T-cell (primary cell): ENCODE measurements at regions of chr9 and their contacts with region 1.

Region 1: GRCh38 chr9:77977210-77977611 is 54.4 kb downstream of the GNAQ start:
- DNase-seq: peak in 32 of 35 experiments; percentile 13 to 68 (median 29)
- ATAC-seq: peak; percentile 17 to 64 (median 64)
- H3K4me3 ChIP-seq: peak overlapping the region in 1 of 2 donors; percentile 25
- H3K4me3 Mint-ChIP-seq: peak overlapping the region in 1 of 3 donors; percentile 56
- H3K27ac ChIP-seq: peak overlapping the region; percentile 25
- H3K27ac Mint-ChIP-seq: peak overlapping the region; percentile 78 to 85
- H3K4me1 ChIP-seq: peaks cover 36 to 39% of the 10 kb centered on the region in 2 experiments
- H3K4me1 Mint-ChIP-seq: peaks cover 64 to 73% (median 66%) of the 10 kb centered on the region in 3 donors
- H3K27me3 ChIP-seq: no peaks in the 10 kb centered on the region
- H3K27me3 Mint-ChIP-seq: no peaks in the 10 kb centered on the region

Region 2: DNA sequence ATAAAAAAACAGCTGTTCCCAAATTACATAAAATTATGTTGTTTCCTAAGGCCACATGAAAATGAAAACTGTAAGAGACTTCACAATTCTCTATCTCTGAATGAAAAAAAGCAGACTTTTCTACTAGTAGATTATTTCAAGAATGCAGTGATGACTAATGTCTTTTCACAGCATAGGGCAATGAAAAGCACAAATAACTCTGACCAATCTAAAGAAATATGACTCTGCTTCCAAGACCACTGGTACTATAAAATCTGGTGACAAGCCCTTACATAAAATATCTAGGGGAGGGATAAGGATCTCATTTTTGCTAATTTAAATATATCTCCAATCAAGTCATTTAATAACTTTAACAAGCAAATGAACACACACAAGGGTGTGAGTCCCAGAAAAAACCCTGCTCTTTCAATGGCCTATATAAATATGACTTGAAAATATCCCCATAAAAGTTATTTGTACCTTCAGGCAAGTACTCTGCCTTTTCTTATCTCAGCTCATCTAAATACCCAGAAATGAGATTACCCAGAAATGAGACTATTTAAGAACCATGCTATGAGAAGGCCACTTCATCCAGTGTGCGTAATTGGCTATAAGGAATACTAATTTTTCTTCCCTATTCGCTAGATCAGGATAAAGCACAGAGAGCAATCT is 50.8 kb before region 1 on chr9:
- CTCF ChIA-PET with region 1: no interaction called
- POLR2A ChIA-PET with region 1: interaction called in 1 of 2 experiments, 11 read pairs
- DNase-seq: no peak
- ATAC-seq: no peak
- H3K4me3 ChIP-seq: no peak overlapping the region
- H3K4me3 Mint-ChIP-seq: no peak overlapping the region
- H3K27ac ChIP-seq: no peak overlapping the region
- H3K27ac Mint-ChIP-seq: no peak overlapping the region
- H3K4me1 ChIP-seq: peaks cover 0 to 2% of the 10 kb centered on the region in 2 experiments
- H3K4me1 Mint-ChIP-seq: peaks cover 32 to 38% (median 34%) of the 10 kb centered on the region in 3 donors
- H3K27me3 ChIP-seq: no peaks in the 10 kb centered on the region
- H3K27me3 Mint-ChIP-seq: no peaks in the 10 kb centered on the region

Region 3: GRCh38 chr9:78035383-78035993 is 58.3 kb after region 1 on chr9:
- CTCF ChIA-PET with region 1: interaction called, 36 to 40 read pairs
- POLR2A ChIA-PET with region 1: interaction called in 1 of 2 experiments, 3 read pairs
- DNase-seq: peak in 32 of 35 experiments; percentile 8 to 88 (median 39)
- ATAC-seq: no peak
- H3K4me3 ChIP-seq: peak overlapping the region in 1 of 2 donors; percentile 18
- H3K4me3 Mint-ChIP-seq: no peak overlapping the region
- H3K27ac ChIP-seq: no peak overlapping the region
- H3K27ac Mint-ChIP-seq: peak overlapping the region; percentile 57 to 83
- H3K4me1 ChIP-seq: peaks cover 10 to 17% of the 10 kb centered on the region in 2 experiments
- H3K4me1 Mint-ChIP-seq: peaks cover 34 to 37% (median 36%) of the 10 kb centered on the region in 3 donors
- H3K27me3 ChIP-seq: no peaks in the 10 kb centered on the region
- H3K27me3 Mint-ChIP-seq: no peaks in the 10 kb centered on the region

Region 4: GRCh38 chr9:78121488-78121887 is 144.3 kb after region 1 on chr9:
- CTCF ChIA-PET with region 1: interaction called in 1 of 2 experiments, 19 read pairs
- POLR2A ChIA-PET with region 1: no interaction called
- DNase-seq: peak in 29 of 35 experiments; percentile 8 to 70 (median 25)
- ATAC-seq: no peak
- H3K4me3 ChIP-seq: no peak overlapping the region
- H3K4me3 Mint-ChIP-seq: no peak overlapping the region
- H3K27ac ChIP-seq: no peak overlapping the region
- H3K27ac Mint-ChIP-seq: peak overlapping the region; percentile 68 to 69
- H3K4me1 ChIP-seq: peaks cover 15 to 26% of the 10 kb centered on the region in 2 experiments
- H3K4me1 Mint-ChIP-seq: peaks cover 40 to 50% (median 45%) of the 10 kb centered on the region in 3 donors
- H3K27me3 ChIP-seq: no peaks in the 10 kb centered on the region
- H3K27me3 Mint-ChIP-seq: peaks cover 0 to 2% of the 10 kb centered on the region in 2 donors

Region 5: DNA sequence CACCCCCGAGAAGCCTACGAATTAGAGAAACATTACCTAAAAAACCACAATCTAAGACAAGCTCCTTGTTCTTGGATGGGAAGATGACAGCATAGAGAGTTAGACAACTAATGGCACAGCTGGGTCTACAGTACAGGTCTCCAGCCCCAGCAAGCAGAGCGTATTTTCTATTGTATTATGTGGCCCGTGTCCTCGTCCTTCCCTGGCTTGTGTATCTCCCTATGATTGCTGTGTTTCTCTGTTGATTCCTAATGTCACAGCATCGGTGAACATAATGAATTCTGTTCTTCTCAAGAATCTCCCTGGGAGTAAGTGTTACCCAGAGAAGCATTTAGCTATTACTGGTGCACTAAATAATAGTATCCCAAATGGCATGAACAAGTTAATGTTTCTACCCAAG is 191.9 kb after region 1 on chr9:
- CTCF ChIA-PET with region 1: no interaction called
- POLR2A ChIA-PET with region 1: no interaction called
- DNase-seq: no peak
- ATAC-seq: no peak
- H3K4me3 ChIP-seq: no peak overlapping the region
- H3K4me3 Mint-ChIP-seq: no peak overlapping the region
- H3K27ac ChIP-seq: no peak overlapping the region
- H3K27ac Mint-ChIP-seq: no peak overlapping the region
- H3K4me1 ChIP-seq: no peaks in the 10 kb centered on the region
- H3K4me1 Mint-ChIP-seq: no peaks in the 10 kb centered on the region
- H3K27me3 ChIP-seq: no peaks in the 10 kb centered on the region
- H3K27me3 Mint-ChIP-seq: no peaks in the 10 kb centered on the region

Region 6: DNA sequence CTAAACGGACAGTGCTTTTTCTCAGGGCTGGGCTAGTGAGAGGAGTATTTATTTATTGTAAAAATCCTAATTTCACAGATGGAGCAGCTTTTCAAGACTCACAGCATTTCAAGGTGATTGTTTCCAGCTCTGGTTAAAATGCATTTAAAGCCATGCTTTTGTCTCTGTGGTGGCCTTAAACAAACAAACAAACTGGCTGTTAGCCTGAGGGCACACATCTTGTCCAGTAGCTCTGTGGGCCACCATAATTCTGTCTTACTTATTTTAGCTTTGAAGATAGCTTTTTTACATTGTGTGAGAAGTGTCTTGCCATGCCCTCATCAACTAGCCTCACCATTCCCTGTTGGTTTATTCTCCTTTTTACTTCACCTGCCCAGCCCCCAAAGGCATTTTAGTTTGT is 537.9 kb after region 1 on chr9:
- CTCF ChIA-PET with region 1: no interaction called
- POLR2A ChIA-PET with region 1: no interaction called
- DNase-seq: no peak
- ATAC-seq: no peak
- H3K4me3 ChIP-seq: no peak overlapping the region
- H3K4me3 Mint-ChIP-seq: no peak overlapping the region
- H3K27ac ChIP-seq: no peak overlapping the region
- H3K27ac Mint-ChIP-seq: no peak overlapping the region
- H3K4me1 ChIP-seq: no peaks in the 10 kb centered on the region
- H3K4me1 Mint-ChIP-seq: no peaks in the 10 kb centered on the region
- H3K27me3 ChIP-seq: peaks cover 0 to 4% of the 10 kb centered on the region in 2 experiments
- H3K27me3 Mint-ChIP-seq: peaks cover 4% of the 10 kb centered on the region in 2 donors

Region 7: GRCh38 chr9:79034583-79034982 is 1057.4 kb after region 1 on chr9:
- CTCF ChIA-PET with region 1: no interaction called
- POLR2A ChIA-PET with region 1: no interaction called
- DNase-seq: no peak
- ATAC-seq: no peak
- H3K4me3 ChIP-seq: no peak overlapping the region
- H3K4me3 Mint-ChIP-seq: no peak overlapping the region
- H3K27ac ChIP-seq: no peak overlapping the region
- H3K27ac Mint-ChIP-seq: no peak overlapping the region
- H3K4me1 ChIP-seq: no peaks in the 10 kb centered on the region
- H3K4me1 Mint-ChIP-seq: no peaks in the 10 kb centered on the region
- H3K27me3 ChIP-seq: peaks cover 0 to 4% of the 10 kb centered on the region in 2 experiments
- H3K27me3 Mint-ChIP-seq: peaks cover 0 to 4% of the 10 kb centered on the region in 2 donors